ENCODE measurements at regions of chr9 and their contacts with region 1.

Region 1: GRCh38 chr9:21709464-21710058 is 92.9 kb upstream of the MTAP start:
- DNase-seq: peak; percentile 69 to 72
- H3K4me3 ChIP-seq: no peak overlapping the region
- H3K27ac ChIP-seq: no peak overlapping the region
- H3K4me1 ChIP-seq: no peaks in the 10 kb centered on the region
- H3K27me3 ChIP-seq: no peaks in the 10 kb centered on the region
- CTCF ChIP-seq: peak in 5 of 7 experiments; percentile 62 to 78 (median 70)
- EP300 ChIP-seq: no peak
- POLR2A ChIP-seq: no peak

Region 2: DNA sequence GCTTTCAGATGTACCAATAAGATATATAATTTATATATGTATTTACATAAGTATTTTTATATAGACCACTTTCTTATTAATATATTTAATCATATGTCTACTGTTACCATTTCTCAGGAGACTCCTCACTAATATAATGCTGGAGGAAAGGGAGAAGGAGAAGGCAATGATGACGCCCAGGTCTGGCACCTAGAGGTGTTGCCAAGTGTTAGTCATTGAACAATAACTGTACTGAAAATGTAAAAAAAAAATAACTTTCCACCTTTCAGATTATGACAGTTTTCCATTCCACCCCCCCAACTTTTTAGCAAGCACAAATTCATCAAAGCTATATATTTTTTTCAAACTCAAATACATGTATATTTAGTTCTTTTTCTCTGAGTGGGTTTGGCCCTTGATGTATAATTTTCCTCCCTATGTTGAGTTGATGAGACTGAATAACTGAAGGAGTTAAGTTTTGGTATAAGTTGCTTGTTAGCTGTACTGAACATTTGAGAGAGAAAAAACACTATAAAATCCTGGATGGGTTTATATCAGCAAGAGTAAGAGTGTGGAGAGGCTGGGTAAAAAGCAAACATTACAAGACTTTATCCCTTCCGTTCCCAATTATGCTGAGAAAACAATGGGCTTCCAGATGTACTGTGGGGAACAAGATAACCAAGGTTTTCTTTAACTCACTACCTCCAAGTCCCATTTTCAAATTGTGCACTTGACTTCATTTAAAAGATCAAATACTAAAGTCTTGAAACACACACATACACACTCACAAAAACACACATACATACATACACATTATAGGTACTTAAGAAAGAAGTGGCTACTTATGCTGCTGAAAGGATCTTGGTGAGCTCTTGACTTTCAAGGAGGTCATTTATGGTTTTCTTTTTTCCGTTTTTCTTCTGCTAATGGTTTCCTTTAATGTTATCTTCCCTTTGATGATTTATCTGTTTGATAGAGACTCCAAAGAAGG is 84.6 kb before region 1 on chr9:
- intact Hi-C with region 1: no loop called
- DNase-seq: no peak
- H3K4me3 ChIP-seq: no peak overlapping the region
- H3K27ac ChIP-seq: no peak overlapping the region
- H3K4me1 ChIP-seq: no peaks in the 10 kb centered on the region
- H3K27me3 ChIP-seq: no peaks in the 10 kb centered on the region
- CTCF ChIP-seq: no peak
- EP300 ChIP-seq: no peak
- POLR2A ChIP-seq: no peak

Region 3: DNA sequence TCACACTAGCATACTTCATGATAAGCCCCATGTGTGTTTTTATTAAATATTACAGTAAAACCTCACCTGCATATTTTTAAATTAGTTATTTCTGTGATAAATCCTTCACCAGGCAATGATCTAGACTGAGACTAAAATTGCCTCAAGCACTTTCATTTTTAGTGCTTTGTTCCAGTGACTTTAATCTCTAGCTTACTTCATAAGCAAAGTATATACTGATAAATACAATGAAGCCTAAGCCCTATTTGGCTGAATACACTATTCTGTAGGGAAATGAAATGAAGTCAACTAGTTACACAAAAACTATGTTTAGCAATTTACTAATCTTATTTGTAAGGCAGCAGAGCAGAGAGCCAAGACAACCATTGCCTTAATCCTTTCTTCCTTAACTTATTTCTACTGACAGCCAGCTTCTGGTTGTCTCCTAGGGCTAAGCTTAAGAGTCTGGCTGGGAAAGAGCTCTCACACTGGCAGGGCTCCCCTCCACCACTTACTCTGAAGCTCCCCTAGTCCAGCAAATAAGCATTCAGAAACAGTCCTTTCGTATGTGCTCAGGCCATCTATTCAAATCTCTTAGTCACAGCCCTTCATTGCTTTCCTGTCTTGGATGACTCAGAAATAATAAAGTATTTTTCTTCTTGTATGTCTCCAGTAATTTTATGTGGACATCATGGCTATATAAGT is 61.5 kb after region 1 on chr9:
- intact Hi-C with region 1: loop called (anchors 10 kb)
- DNase-seq: peak in 1 of 2 donors; percentile 40
- H3K4me3 ChIP-seq: no peak overlapping the region
- H3K27ac ChIP-seq: peak overlapping the region in 3 of 5 donors; percentile 38 to 49 (median 38)
- H3K4me1 ChIP-seq: peaks cover 0 to 10% (median 0%) of the 10 kb centered on the region in 4 donors
- H3K27me3 ChIP-seq: peaks cover 0 to 4% (median 0%) of the 10 kb centered on the region in 3 donors
- CTCF ChIP-seq: no peak
- EP300 ChIP-seq: no peak
- POLR2A ChIP-seq: no peak

Measured in stomach (tissue), 19 donors.